Activated T-helper 1 cell treated with anti-CD3 and anti-CD28 coated beads, Interleukin-12 subunit alpha, Interleukin-12 subunit beta, Interleukin-2, Interleukin-4 antibody, amounts not matched to agents 30 ng/mL and 10 ng/mL and 1 ng/mL, durations not matched to agents 14 hours and 24 hours and 36 hours (primary cell): ENCODE measurements at regions of chr10 and their contacts with region 1.

Region 1: DNA sequence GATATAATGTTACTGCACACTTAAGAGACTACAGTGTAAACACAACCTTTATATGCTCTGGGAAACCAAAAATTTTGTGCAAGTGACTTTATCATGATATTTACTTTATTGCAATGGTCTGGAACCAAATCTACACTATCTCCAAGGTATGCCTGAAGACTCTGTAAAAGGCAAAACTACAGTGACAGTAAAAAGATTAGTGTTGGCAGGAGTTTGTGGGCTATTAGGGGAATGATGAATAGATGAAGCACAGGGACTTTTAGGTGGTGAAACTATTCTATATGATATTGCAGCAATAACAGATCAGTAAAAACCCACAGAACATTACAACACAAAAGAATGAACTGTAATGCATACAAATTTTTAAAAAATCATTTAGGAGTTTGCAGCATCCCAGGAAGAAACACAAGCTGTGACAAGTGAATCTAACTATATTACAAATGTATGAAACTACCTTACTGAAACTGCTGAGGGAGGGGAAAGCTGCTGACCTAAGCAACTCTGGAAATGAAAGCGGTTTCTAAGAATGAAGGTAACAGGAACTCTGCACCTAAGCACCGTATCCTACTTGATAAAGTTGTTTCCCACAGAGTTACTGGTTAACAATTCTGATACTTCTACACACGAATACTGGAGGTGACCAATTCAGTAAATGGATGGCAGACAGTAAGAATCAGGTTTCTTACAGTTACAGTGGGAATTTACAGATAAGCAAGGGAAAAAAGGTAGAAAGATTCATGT is 82.6 kb downstream of the ATE1 start:
- DNase-seq: no peak
- H3K4me3 Mint-ChIP-seq: no peak overlapping the region
- H3K27ac Mint-ChIP-seq: no peak overlapping the region
- H3K4me1 Mint-ChIP-seq: peaks cover 10% of the 10 kb centered on the region
- H3K27me3 Mint-ChIP-seq: no peaks in the 10 kb centered on the region

Region 2: DNA sequence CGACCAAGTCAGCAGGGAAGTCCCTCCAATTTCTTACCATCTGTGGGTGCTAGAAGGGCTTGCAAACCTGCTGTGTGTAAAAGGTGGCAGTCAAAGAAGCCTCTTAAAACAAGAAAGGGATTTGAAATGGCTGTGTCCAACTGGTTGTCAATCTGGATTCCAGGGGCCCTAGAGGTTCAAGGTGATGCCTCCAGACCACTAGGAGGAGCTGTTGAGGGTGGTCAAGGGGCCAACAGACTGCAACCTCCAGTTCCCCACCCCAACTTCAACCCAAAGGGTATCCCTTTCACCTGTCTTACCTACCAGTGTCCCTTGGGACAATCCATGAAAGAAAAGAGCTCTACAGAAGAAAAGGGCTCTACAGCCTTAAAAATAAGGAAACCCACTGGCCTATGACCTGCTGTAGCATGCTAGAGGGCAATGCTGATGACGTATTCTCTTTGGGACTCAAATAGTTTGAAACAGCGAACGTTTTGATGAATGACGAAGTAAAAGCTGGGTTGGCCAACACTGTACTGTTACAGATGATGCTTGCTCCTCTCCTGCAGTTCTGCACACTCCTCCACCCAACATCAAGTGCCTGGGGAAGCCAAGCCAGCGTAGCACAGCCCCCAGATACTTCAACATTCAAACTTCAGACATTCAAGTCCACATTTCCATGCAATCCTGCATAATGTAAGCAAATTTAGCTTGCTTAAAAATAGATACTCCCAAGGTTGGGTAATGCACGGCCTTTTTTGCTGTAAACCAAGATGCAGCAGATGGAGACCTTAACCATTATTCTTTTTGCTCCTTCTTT is 1040.0 kb before region 1 on chr10:
- intact Hi-C with region 1: no loop called
- DNase-seq: no peak
- H3K4me3 Mint-ChIP-seq: no peak overlapping the region
- H3K27ac Mint-ChIP-seq: no peak overlapping the region
- H3K4me1 Mint-ChIP-seq: no peaks in the 10 kb centered on the region
- H3K27me3 Mint-ChIP-seq: peaks cover 5% of the 10 kb centered on the region

Region 3: GRCh38 chr10:121753726-121754476 is 91.3 kb before region 1 on chr10:
- intact Hi-C with region 1: loop called (anchors 1 kb)
- DNase-seq: no peak
- H3K4me3 Mint-ChIP-seq: no peak overlapping the region
- H3K27ac Mint-ChIP-seq: peak overlapping the region; percentile 40
- H3K4me1 Mint-ChIP-seq: peaks cover 17% of the 10 kb centered on the region
- H3K27me3 Mint-ChIP-seq: peaks cover 3% of the 10 kb centered on the region